Caco-2 (cell line): ENCODE measurements at regions of chr4 and their contacts with region 1.

Region 1: DNA sequence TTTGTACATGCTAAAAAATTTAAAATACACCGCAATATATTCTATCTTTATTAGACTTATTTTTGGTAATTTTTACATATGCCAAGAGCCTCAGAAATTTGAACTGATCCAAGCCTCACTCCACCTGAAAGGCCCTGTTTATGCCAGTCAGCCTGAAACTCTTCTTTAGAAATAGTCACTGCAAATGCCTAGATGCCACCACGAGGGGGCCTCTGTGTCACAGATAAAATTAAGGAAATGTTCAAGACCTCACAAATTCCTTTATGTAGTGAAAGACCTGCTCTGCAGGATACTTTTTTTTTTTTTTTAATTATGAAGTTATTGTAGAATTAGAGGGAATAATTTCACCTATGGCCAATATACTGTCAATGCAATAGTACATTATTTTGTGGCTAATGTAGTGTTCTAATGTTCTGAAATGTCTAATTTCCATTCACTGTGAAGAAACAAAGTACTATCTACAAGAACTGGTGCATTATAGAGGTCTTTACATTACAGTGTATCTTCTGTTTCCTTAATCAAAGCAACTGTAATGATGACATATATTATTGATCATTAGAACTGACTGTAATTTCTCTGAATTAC is 69.8 kb downstream of the DTHD1 start:
- DNase-seq: peak; percentile 55 to 56
- H3K4me3 ChIP-seq: no peak overlapping the region
- H3K4me3 Mint-ChIP-seq: no peak overlapping the region
- H3K27ac Mint-ChIP-seq: no peak overlapping the region
- H3K4me1 ChIP-seq: no peaks in the 10 kb centered on the region
- H3K4me1 Mint-ChIP-seq: no peaks in the 10 kb centered on the region
- H3K27me3 ChIP-seq: no peaks in the 10 kb centered on the region
- H3K27me3 Mint-ChIP-seq: peaks cover 2% of the 10 kb centered on the region
- CTCF ChIP-seq: peak; percentile 64 to 68

Region 2: DNA sequence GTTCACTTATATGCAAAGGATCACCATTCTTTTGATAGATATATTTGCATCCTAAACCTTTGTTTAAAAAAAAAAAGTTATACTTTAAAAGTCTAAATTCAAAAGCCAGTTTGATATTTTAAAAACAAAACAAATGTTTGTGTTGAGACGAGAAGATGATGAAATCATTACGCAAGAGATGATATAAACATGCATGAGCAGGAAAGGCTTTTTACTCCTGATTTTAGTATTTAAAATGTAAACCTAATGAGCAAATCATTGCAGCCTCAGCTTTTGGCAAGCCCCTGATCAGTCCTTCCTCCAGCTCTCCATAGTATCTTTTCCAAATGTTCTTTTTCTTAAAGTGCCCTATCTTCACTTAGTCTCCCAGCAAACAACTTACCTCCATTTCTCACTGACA is 222.5 kb before region 1 on chr4:
- CTCF ChIA-PET with region 1: no interaction called
- POLR2A ChIA-PET with region 1: no interaction called
- intact Hi-C with region 1: no loop called
- DNase-seq: no peak
- H3K4me3 ChIP-seq: no peak overlapping the region
- H3K4me3 Mint-ChIP-seq: no peak overlapping the region
- H3K27ac Mint-ChIP-seq: peak overlapping the region; percentile 14
- H3K4me1 ChIP-seq: no peaks in the 10 kb centered on the region
- H3K4me1 Mint-ChIP-seq: no peaks in the 10 kb centered on the region
- H3K27me3 ChIP-seq: no peaks in the 10 kb centered on the region
- H3K27me3 Mint-ChIP-seq: no peaks in the 10 kb centered on the region
- CTCF ChIP-seq: no peak

Region 3: DNA sequence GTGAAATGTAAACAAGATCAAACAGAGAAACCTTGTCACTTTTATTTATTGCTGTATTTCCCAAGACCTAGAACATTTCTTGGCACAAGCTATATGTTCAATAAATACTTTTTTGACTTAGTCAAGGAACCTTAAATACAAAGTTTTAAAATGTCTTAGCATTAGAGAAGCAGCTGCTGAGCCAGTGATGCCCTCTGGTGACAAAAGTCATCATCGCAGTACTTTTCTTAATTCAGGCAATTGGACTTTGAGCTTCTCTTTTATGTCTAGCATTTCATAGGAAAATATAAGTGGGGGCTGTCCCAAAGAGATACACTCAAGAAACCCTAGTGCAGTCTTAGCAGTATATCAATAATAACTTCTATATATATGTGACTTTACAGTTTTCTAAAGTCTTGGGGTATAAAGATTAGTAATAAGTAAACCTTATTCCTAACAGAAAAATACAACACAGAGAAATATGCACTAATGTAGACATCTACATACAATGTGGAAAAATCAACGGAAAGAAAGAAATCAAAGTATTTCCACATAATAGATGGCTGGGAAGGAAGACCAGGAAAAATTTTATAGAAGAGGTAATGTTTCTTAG is 48.7 kb after region 1 on chr4:
- CTCF ChIA-PET with region 1: interaction called, 6 read pairs
- POLR2A ChIA-PET with region 1: no interaction called
- intact Hi-C with region 1: loop called (anchors 1 kb)
- DNase-seq: peak in 1 of 2 experiments; percentile 16
- H3K4me3 ChIP-seq: no peak overlapping the region
- H3K4me3 Mint-ChIP-seq: no peak overlapping the region
- H3K27ac Mint-ChIP-seq: no peak overlapping the region
- H3K4me1 ChIP-seq: no peaks in the 10 kb centered on the region
- H3K4me1 Mint-ChIP-seq: no peaks in the 10 kb centered on the region
- H3K27me3 ChIP-seq: no peaks in the 10 kb centered on the region
- H3K27me3 Mint-ChIP-seq: peaks cover 3% of the 10 kb centered on the region
- CTCF ChIP-seq: peak; percentile 52 to 64

Region 4: GRCh38 chr4:37389967-37390580 is 1038.9 kb after region 1 on chr4:
- CTCF ChIA-PET with region 1: no interaction called
- POLR2A ChIA-PET with region 1: no interaction called
- intact Hi-C with region 1: loop called (anchors 2 kb)
- DNase-seq: peak in 1 of 2 experiments; percentile 61
- H3K4me3 ChIP-seq: no peak overlapping the region
- H3K4me3 Mint-ChIP-seq: no peak overlapping the region
- H3K27ac Mint-ChIP-seq: no peak overlapping the region
- H3K4me1 ChIP-seq: peaks cover 12% of the 10 kb centered on the region; the same call in 1 of the 2 replicates
- H3K4me1 Mint-ChIP-seq: peaks cover 11% of the 10 kb centered on the region
- H3K27me3 ChIP-seq: no peaks in the 10 kb centered on the region
- H3K27me3 Mint-ChIP-seq: peaks cover 3% of the 10 kb centered on the region
- CTCF ChIP-seq: peak; percentile 57 to 70